ENCODE measurements at regions of chr14 and their contacts with region 1.

Region 1: GRCh38 chr14:93115069-93115820 is 480 bp downstream of the ITPK1 start:
- DNase-seq: peak; percentile 88
- H3K4me3 ChIP-seq: peak overlapping the region; percentile 81
- H3K27ac ChIP-seq: peak overlapping the region; percentile 46
- H3K4me1 ChIP-seq: peaks cover 27% of the 10 kb centered on the region
- CTCF ChIP-seq: no peak

Region 2: DNA sequence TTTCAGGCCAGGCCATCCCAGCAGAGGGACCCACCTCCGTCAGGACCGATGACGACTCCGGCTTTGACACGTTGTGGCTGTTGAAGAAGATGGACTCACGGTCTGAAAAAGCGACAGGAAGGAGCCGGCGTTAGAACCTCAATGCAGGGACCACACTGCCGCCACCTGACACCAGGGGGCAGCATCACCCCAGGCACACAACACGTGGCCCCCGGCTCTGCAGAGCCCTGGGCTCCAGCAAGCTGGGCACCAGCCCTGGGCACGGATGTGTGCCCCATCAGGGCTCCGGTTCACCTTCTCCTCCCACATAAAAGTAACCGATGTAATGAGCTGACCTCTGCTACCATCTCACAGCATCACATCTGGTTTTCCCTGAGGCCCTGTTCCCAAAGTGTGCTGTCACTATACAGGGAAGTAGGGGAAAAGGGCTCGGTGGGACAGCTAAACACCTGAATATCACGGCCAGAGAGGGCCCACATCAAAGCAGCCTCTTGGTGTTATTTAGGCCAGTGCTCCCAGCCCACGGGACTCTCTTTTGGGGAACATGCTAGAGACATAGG is 163.3 kb before region 1 on chr14:
- CTCF ChIA-PET with region 1: interaction called, 3 read pairs
- POLR2A ChIA-PET with region 1: no interaction called
- intact Hi-C with region 1: loop called (anchors 1 kb)
- DNase-seq: peak; percentile 79
- H3K4me3 ChIP-seq: no peak overlapping the region
- H3K27ac ChIP-seq: no peak overlapping the region
- H3K4me1 ChIP-seq: peaks cover 4% of the 10 kb centered on the region
- CTCF ChIP-seq: peak; percentile 95

Region 3: DNA sequence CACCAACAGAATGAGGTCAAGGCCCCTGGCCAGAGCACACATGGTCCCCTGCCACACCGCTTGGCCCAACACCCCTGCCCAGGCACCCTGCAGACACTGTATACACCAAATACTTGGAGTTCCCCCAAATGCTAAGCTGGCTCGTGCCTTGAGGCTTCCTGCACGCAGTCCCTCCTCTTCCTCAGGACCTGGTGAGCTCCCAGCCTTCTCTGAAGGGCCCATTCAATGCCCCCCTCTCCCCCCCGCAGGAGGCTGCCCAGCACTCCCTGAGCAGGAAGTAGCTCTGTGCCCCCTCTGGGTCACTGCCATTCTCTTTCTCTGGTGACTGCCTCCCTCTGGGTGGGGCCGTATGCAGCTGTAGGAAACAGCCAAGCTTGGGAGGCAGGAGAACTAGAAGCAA is 74.8 kb before region 1 on chr14:
- CTCF ChIA-PET with region 1: no interaction called
- POLR2A ChIA-PET with region 1: no interaction called
- intact Hi-C with region 1: no loop called
- DNase-seq: no peak
- H3K4me3 ChIP-seq: no peak overlapping the region
- H3K27ac ChIP-seq: no peak overlapping the region
- H3K4me1 ChIP-seq: no peaks in the 10 kb centered on the region
- CTCF ChIP-seq: no peak

Region 4: GRCh38 chr14:93137864-93138263 is 22.6 kb after region 1 on chr14:
- CTCF ChIA-PET with region 1: interaction called, 7 read pairs
- POLR2A ChIA-PET with region 1: interaction called, 7 read pairs
- intact Hi-C with region 1: loop called (anchors 1 kb)
- DNase-seq: peak; percentile 24
- H3K4me3 ChIP-seq: no peak overlapping the region
- H3K27ac ChIP-seq: no peak overlapping the region
- H3K4me1 ChIP-seq: no peaks in the 10 kb centered on the region
- CTCF ChIP-seq: no peak; the same call in 1 of the 2 replicates

Region 5: DNA sequence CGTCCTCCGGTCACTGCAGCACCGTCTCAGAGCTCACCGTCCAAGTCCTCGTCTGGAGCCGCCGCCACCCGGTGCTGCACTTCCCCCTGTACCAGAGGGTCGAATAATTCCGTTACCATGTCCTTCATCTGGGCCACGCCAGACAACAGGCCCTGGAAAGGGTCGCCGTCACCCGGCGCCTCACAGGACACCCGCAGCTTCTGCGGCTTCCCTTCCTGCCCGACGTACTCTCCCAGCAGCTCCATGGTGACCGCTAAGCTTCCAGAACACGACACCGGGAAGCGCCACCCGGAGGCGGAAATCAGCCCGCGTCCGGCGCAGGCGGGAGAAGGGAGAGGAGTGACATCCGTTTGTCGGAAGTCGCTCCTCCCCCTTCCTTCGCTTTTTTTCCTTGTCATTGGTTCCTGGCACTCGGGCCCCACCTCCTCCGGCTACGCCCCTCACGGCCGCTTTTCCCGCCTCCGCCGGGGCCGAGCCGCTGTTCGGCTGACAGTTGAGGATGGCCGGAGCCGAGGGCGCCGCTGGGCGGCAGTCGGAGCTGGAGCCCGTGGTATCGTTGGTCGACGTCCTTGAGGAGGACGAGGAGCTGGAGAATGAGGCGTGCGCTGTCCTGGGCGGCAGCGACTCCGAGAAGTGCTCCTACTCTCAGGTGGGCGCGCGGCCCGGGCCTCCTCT is 91.7 kb after region 1 on chr14 and contains the starts of genes GON7 and UBR7:
- CTCF ChIA-PET with region 1: interaction called, 5 read pairs
- POLR2A ChIA-PET with region 1: no interaction called
- intact Hi-C with region 1: loop called (anchors 2 kb)
- DNase-seq: peak; percentile 94
- H3K4me3 ChIP-seq: peak within 1 kb of the TSS; percentile 84
- H3K27ac ChIP-seq: peak within 1 kb of the TSS; percentile 66
- H3K4me1 ChIP-seq: peaks cover 66% of the 10 kb centered on the region
- CTCF ChIP-seq: no peak
- total RNA-seq, gene GON7: 54.8 and 78.7 TPM in 2 replicates
- total RNA-seq, gene UBR7: 45.1 and 76.5 TPM in 2 replicates

Region 6: GRCh38 chr14:93332853-93333630 is 217.8 kb after region 1 on chr14 and contains the start of gene BTBD7:
- CTCF ChIA-PET with region 1: no interaction called
- POLR2A ChIA-PET with region 1: no interaction called
- intact Hi-C with region 1: loop called (anchors 10 kb)
- DNase-seq: peak; percentile 95
- H3K4me3 ChIP-seq: peak within 1 kb of the TSS; percentile 75
- H3K27ac ChIP-seq: peak within 1 kb of the TSS; percentile 62
- H3K4me1 ChIP-seq: peaks cover 34% of the 10 kb centered on the region
- CTCF ChIP-seq: no peak
- total RNA-seq, gene BTBD7: 9.7 and 10.7 TPM in 2 replicates

Measured in OCI-LY7 (cell line).